Left cardiac atrium (tissue), 4 donors: ENCODE measurements at regions of chr1 and their contacts with region 1.

Region 1: DNA sequence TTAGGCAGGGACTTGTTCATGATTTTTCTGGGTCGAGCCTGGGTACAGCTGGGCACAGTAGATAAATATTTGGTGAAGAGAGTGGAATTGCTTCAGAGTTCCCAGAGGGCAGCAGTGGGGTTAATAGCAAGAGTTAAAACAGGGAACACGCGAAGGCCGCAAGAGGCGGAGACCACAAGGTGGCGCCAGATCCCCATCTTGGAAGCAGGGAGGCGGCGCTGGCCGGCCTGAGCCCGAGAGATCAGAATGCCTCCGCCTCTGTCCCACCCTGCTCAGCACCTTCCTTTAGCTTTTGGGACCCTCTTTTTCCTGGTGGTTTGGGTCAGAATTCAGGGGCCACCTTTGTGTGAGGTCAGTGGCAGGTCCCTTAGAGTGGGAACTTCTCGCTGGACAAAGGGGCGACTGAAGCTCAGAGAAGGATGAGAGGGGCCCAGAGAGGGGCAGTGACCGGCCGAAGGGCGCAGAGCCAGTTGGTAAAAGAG is 6.5 kb upstream of the PADI2 start:
- DNase-seq: peak; percentile 89
- ATAC-seq: peak; percentile 83 to 88

Region 2: GRCh38 chr1:16971341-16972188 is 154.2 kb before region 1 on chr1:
- intact Hi-C with region 1: no loop called
- DNase-seq: no peak
- ATAC-seq: peak in 1 of 2 donors; percentile 6

Region 3: GRCh38 chr1:17066361-17067068 is 59.3 kb before region 1 on chr1:
- intact Hi-C with region 1: no loop called
- DNase-seq: no peak
- ATAC-seq: no peak

Region 4: GRCh38 chr1:17236779-17237560 is 111.2 kb after region 1 on chr1:
- intact Hi-C with region 1: loop called (anchors 1 to 2 kb)
- DNase-seq: peak; percentile 88
- ATAC-seq: peak; percentile 77 to 79

Region 5: DNA sequence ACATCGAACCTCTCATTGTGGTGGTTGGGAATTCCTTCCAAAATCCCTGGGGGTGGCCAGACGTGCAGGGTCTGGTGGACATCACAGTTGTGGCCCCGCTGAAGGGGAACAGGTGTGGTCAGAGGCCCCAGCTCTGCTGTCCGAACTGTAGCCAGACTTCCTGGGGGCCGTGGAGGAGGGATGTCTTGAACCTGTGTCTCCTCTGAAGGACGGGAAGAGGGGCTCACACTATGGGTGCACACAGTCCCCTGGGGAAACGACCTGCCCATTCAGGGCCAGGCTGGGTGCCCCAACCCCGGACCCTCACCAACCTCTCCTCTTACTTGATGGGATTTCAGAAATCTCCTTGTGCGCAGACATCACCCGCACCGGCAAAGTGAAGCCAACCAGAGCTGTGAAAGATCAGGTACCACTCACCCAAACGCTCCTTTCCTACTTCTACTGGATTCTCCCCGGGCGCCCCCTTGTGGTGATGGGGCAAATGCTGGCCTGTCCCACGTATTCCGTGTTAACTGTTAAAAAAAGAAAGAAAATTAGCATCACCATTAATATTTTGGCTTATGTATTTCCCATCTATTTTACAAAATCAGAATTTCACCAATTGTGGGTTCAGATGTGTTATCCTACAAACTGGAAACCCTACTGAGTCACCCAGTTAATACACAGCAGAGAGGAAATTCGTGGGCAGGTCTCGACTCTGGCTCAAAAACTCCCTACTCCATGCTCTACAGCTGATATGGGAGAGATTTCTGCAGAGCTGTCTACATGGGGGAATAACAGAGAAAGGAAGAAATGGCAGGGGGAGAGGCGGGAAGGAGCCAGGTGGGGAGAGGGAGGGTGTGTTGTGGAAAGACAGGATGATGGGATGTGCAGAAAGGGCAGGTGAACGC is 210.3 kb after region 1 on chr1:
- intact Hi-C with region 1: loop called (anchors 5 to 10 kb)
- DNase-seq: peak; percentile 62
- ATAC-seq: peak in 1 of 2 donors; percentile 57

Region 6: GRCh38 chr1:17405898-17406759 is 280.3 kb after region 1 on chr1:
- intact Hi-C with region 1: loop called (anchors 5 to 10 kb)
- DNase-seq: peak; percentile 60
- ATAC-seq: peak; percentile 86 to 87